IMR-90 (cell line): ENCODE measurements at regions of chr2 and their contacts with region 1.

Region 1: GRCh38 chr2:69798909-69799526 is 30.4 kb upstream of the GMCL1 start:
- DNase-seq: peak; percentile 84
- ATAC-seq: peak; percentile 67
- H3K4me3 ChIP-seq: no peak overlapping the region
- H3K27ac ChIP-seq: no peak overlapping the region
- H3K4me1 ChIP-seq: peaks cover 7% of the 10 kb centered on the region; the same call in 1 of the 2 replicates
- H3K27me3 ChIP-seq: no peaks in the 10 kb centered on the region
- CTCF ChIP-seq: no peak
- POLR2A ChIP-seq: no peak
- RAD21 ChIP-seq: no peak

Region 2: GRCh38 chr2:69741619-69742466 is 57.2 kb before region 1 on chr2 and contains the start of gene ANXA4:
- CTCF ChIA-PET with region 1: no interaction called
- POLR2A ChIA-PET with region 1: no interaction called
- dilution Hi-C with region 1: no loop called
- in situ Hi-C with region 1: no loop called
- intact Hi-C with region 1: loop called (anchors 5 kb)
- DNase-seq: peak; percentile 58
- ATAC-seq: peak; percentile 92
- H3K4me3 ChIP-seq: peak within 1 kb of the TSS; percentile 89
- H3K27ac ChIP-seq: peak within 1 kb of the TSS; percentile 79
- H3K4me1 ChIP-seq: peaks cover 2% of the 10 kb centered on the region
- H3K27me3 ChIP-seq: no peaks in the 10 kb centered on the region
- CTCF ChIP-seq: no peak
- POLR2A ChIP-seq: no peak
- RAD21 ChIP-seq: no peak
- total RNA-seq, gene ANXA4: 22.2 and 25.8 TPM in 2 replicates

Region 3: GRCh38 chr2:69848201-69848770 is 49.3 kb after region 1 on chr2:
- CTCF ChIA-PET with region 1: no interaction called
- POLR2A ChIA-PET with region 1: no interaction called
- dilution Hi-C with region 1: no loop called
- in situ Hi-C with region 1: no loop called
- intact Hi-C with region 1: no loop called
- DNase-seq: no peak
- ATAC-seq: no peak
- H3K4me3 ChIP-seq: no peak overlapping the region
- H3K27ac ChIP-seq: no peak overlapping the region
- H3K4me1 ChIP-seq: no peaks in the 10 kb centered on the region
- H3K27me3 ChIP-seq: no peaks in the 10 kb centered on the region
- CTCF ChIP-seq: no peak
- POLR2A ChIP-seq: no peak
- RAD21 ChIP-seq: no peak